Activated CD4-positive, alpha-beta T cell treated with anti-CD3 and anti-CD28 coated beads for 36 hours (primary cell): ENCODE measurements at regions of chr14 and their contacts with region 1.

Region 1: DNA sequence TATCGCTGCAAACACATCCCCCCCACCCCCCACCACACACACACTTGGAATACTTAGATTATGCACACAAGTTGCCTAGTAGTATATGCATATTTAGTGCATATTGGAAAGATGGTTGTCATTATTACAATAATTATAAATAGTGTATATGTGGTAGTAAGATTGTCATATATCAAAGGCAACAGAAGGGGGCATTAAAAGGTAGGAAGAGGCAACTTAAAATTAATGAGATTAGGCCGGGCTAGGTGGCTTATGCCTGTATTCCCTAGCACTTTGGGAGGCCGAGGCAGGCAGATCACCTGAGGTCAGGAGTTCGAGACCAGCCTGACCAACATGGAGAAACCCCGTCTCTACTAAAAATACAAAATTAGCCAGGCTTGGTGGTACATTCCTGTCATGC is 52.1 kb downstream of the GSC start:
- DNase-seq: no peak
- ATAC-seq: no peak
- H3K4me3 Mint-ChIP-seq: no peak overlapping the region
- H3K27ac Mint-ChIP-seq: no peak overlapping the region
- H3K4me1 Mint-ChIP-seq: no peaks in the 10 kb centered on the region
- H3K27me3 Mint-ChIP-seq: peaks cover 2% of the 10 kb centered on the region

Region 2: DNA sequence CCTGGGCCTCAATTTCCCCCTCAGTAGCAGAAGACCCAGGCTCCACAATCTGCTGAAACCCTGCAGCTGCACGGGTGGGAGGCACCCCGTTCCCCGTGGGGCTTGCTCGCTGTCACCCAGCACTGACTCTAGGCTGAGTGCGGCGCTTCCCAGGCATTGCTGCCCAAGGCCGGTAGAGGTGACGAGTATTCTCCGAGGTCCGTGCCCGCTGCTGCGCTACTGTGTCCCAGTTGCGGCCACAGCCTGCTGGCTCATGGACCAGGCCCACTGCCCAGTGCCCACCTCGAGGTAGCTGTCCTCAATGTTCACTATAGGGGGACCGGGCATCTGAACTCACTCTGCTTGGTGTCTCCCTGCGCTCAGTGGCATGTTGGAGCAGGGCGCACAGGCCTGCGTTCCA is 22.6 kb before region 1 on chr14:
- CTCF ChIA-PET with region 1: no interaction called
- POLR2A ChIA-PET with region 1: no interaction called
- intact Hi-C with region 1: no loop called
- DNase-seq: no peak
- ATAC-seq: no peak
- H3K4me3 Mint-ChIP-seq: no peak overlapping the region
- H3K27ac Mint-ChIP-seq: no peak overlapping the region
- H3K4me1 Mint-ChIP-seq: no peaks in the 10 kb centered on the region
- H3K27me3 Mint-ChIP-seq: peaks cover 8% of the 10 kb centered on the region

Region 3: GRCh38 chr14:94795372-94795771 is 77.6 kb after region 1 on chr14:
- CTCF ChIA-PET with region 1: no interaction called
- POLR2A ChIA-PET with region 1: no interaction called
- intact Hi-C with region 1: no loop called
- DNase-seq: no peak
- ATAC-seq: no peak
- H3K4me3 Mint-ChIP-seq: no peak overlapping the region
- H3K27ac Mint-ChIP-seq: no peak overlapping the region
- H3K4me1 Mint-ChIP-seq: no peaks in the 10 kb centered on the region
- H3K27me3 Mint-ChIP-seq: peaks cover 13% of the 10 kb centered on the region

Region 4: GRCh38 chr14:95196290-95196689 is 478.5 kb after region 1 on chr14:
- CTCF ChIA-PET with region 1: no interaction called
- POLR2A ChIA-PET with region 1: no interaction called
- intact Hi-C with region 1: loop called in 1 of 2 experiments (anchors 1 kb)
- DNase-seq: peak; percentile 14
- ATAC-seq: peak; percentile 78
- H3K4me3 Mint-ChIP-seq: no peak overlapping the region
- H3K27ac Mint-ChIP-seq: no peak overlapping the region
- H3K4me1 Mint-ChIP-seq: peaks cover 2% of the 10 kb centered on the region
- H3K27me3 Mint-ChIP-seq: peaks cover 2% of the 10 kb centered on the region